GM10248 (cell line): ENCODE measurements at regions of chr5 and their contacts with region 1.

Region 1: GRCh38 chr5:39452846-39453245 is 28.1 kb upstream of the DAB2 start:
- DNase-seq: no peak
- CTCF ChIP-seq: no peak

Region 2: DNA sequence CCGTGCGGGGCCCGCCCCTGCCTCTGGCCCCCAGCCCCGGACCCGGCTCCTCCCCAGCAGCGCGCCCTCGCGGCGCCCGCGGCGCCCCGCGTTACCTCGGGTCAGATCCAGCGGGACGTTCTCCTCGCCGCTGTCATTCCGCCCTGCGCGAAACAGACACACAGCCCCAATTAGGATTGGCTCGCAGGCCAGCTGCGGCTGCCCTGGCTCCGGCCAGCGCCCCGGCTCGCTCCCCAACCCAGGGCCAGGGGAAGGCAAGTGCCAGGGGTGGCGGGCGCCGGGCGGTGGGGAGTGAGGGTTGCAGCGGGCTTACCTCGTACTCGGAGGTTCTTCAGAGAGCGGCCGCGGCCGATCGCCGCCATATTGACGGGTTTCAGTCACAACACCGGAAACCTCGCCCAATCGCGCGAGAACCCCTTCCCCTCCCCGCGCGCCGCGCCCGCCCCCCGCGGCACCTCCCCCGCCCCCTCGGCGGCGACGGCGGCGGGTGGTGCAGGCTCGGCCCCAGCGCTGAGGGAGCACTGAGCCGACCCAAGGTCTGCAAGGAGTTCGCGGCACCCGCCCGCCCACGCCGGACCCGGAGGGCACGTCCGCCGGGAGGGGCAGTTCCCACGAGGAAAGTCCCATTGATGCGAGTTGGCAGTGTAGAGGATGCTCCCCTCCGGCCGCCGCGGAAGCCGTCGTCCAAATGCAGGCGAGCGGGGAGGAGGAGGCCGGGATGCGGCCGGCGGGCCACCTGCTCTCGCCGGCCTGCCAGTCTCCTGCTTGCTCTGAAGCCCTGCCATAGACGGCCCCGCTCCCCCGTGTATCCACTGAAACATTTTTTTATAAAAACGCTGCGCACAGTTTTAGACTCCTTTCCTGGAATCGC is 378.6 kb before region 1 on chr5 and contains the start of gene RICTOR:
- CTCF ChIA-PET with region 1: no interaction called
- POLR2A ChIA-PET with region 1: no interaction called
- DNase-seq: peak; percentile 94
- CTCF ChIP-seq: no peak

Region 3: DNA sequence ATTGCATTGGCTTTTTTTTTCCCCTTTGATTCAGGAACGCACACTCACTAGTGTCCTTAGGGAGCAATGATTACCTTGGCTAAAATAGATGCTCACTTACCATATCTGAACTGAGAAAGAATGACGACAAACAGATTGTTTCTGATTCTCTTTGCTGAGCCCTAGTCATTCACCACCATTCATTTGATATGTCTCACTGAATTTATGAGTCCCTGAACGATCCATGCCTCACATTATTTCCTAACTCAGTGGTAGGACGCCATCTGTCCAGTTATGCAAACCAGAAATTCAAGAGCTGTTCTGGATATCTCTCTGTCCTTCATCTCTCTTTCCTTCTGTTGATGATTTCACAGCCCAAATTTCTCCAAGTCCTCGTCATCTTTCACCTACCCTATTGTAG is 11.3 kb after region 1 on chr5:
- CTCF ChIA-PET with region 1: interaction called, 10 read pairs
- POLR2A ChIA-PET with region 1: no interaction called
- DNase-seq: no peak
- CTCF ChIP-seq: no peak